ENCODE measurements at regions of chr17 and their contacts with region 1.

Region 1: DNA sequence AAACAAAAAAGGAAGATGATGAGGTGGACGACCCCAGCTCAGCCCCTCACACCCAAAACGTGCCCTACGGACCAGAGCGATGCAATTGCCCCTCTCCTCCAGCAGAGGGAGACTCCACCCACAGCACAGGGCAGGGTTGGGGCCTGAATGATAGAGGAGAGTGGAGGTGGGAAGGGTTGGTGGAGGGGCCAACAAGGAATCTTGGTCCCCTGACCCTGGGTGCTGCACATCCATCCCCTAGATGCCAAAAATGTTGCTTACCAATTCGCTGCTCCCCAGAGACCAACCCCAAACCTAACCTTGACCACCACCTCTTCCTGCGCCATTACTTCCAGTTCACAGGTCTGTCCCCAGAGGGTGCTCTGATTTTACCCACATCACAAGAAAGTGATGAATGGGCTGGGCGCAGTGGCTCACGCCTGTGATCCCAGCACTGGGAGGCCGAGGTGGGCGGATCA is 12.9 kb downstream of the P2RX5 start:
- DNase-seq: peak; percentile 65
- ATAC-seq: peak; percentile 98
- H3K4me3 Mint-ChIP-seq: no peak overlapping the region
- H3K27ac Mint-ChIP-seq: no peak overlapping the region
- H3K4me1 Mint-ChIP-seq: peaks cover 7% of the 10 kb centered on the region
- H3K27me3 Mint-ChIP-seq: no peaks in the 10 kb centered on the region
- CTCF ChIP-seq: peak; percentile 96

Region 2: GRCh38 chr17:3626831-3627768 is 56.0 kb before region 1 on chr17:
- CTCF ChIA-PET with region 1: no interaction called
- POLR2A ChIA-PET with region 1: no interaction called
- intact Hi-C with region 1: loop called (anchors 10 kb)
- DNase-seq: no peak
- ATAC-seq: no peak
- H3K4me3 Mint-ChIP-seq: no peak overlapping the region
- H3K27ac Mint-ChIP-seq: no peak overlapping the region
- H3K4me1 Mint-ChIP-seq: no peaks in the 10 kb centered on the region
- H3K27me3 Mint-ChIP-seq: no peaks in the 10 kb centered on the region
- CTCF ChIP-seq: no peak

Region 3: DNA sequence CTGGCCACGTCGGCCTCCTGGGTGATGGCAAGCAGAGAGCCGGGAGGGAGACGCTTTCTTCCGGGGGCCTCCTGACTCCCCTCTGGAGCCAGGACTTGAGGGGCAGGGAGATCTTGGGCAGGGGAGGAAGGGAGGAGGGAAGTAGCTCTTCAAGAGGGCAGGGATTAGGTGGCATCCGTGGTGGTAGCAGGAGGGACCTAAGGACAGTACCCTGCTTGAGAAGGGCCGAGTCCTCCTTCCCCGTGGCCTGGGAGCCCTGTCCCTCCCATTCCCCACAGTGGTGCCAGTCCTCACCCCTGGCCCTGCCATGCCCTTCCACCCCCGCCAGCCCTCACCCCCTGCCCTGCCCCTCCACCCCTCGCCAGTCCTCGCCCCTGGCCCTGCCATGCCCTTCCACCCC is 27.3 kb before region 1 on chr17:
- CTCF ChIA-PET with region 1: no interaction called
- POLR2A ChIA-PET with region 1: no interaction called
- intact Hi-C with region 1: no loop called
- DNase-seq: no peak
- ATAC-seq: no peak
- H3K4me3 Mint-ChIP-seq: no peak overlapping the region
- H3K27ac Mint-ChIP-seq: no peak overlapping the region
- H3K4me1 Mint-ChIP-seq: no peaks in the 10 kb centered on the region
- H3K27me3 Mint-ChIP-seq: no peaks in the 10 kb centered on the region
- CTCF ChIP-seq: no peak

Region 4: DNA sequence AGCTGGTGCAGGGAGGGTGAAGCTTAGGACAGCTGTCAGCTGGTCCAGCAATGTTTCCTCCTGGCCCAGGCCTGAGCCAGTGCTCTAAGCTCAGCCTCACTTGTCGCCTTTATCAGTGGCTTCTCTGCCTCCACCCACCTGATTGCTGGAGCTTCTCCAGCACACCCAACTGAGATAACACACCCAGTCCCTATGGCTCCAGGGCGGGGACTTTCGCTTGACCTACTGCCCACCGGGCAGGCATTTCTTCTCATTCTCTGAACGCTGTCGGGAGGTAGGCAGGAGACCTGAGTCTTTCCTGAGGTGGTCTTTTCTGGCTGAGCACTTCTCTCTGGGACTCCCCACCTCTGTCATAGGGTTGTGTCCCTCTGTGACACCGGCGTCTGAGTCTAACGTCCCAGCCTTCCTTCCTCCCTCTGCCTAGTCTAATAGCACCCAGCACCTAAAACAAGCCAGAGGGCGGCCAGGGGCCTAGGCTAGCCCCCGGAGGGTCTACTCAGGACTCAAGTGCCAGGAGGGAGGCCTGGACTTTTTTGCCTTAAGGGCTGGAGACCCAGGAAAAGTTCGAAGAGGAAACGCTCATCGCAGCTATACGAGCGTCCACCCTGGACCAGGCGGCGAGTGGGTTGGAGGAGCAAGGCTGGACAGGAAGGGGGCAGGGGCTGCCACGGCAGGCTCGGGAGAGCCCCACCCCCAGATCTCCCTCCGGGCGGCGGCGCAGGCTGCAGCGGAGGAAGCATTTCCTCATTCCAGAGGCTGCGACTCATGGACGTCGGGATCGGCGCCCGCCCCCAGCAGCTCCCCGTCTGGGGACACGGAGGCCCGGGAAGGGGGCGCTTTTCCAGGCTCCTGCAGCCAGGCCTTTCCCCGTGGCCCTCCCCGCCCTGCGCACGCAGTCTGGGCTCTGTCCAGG is 15.5 kb before region 1 on chr17:
- CTCF ChIA-PET with region 1: interaction called, 19 read pairs
- POLR2A ChIA-PET with region 1: interaction called, 3 read pairs
- intact Hi-C with region 1: no loop called
- DNase-seq: peak; percentile 9
- ATAC-seq: no peak
- H3K4me3 Mint-ChIP-seq: peak overlapping the region; percentile 98
- H3K27ac Mint-ChIP-seq: no peak overlapping the region
- H3K4me1 Mint-ChIP-seq: peaks cover 16% of the 10 kb centered on the region
- H3K27me3 Mint-ChIP-seq: no peaks in the 10 kb centered on the region
- CTCF ChIP-seq: no peak

Region 5: GRCh38 chr17:3695723-3696411 is 12.8 kb after region 1 on chr17 and contains the start of gene P2RX5:
- CTCF ChIA-PET with region 1: interaction called, 10 read pairs
- POLR2A ChIA-PET with region 1: interaction called, 6 read pairs
- intact Hi-C with region 1: no loop called
- DNase-seq: peak; percentile 60
- ATAC-seq: peak; percentile 60
- H3K4me3 Mint-ChIP-seq: peak within 1 kb of the TSS; percentile 87
- H3K27ac Mint-ChIP-seq: peak within 1 kb of the TSS; percentile 93
- H3K4me1 Mint-ChIP-seq: peaks cover 22% of the 10 kb centered on the region
- H3K27me3 Mint-ChIP-seq: no peaks in the 10 kb centered on the region
- CTCF ChIP-seq: no peak
- total RNA-seq, gene P2RX5: 35.7 to 39.5 TPM

Region 6: GRCh38 chr17:3723556-3724369 is 40.7 kb after region 1 on chr17 and contains the start of gene HASPIN:
- CTCF ChIA-PET with region 1: interaction called, 38 read pairs
- POLR2A ChIA-PET with region 1: interaction called, 4 read pairs
- intact Hi-C with region 1: loop called (anchors 5 kb)
- DNase-seq: peak; percentile 93
- ATAC-seq: peak; percentile 91
- H3K4me3 Mint-ChIP-seq: peak within 1 kb of the TSS; percentile 81
- H3K27ac Mint-ChIP-seq: peak within 1 kb of the TSS; percentile 92
- H3K4me1 Mint-ChIP-seq: peaks cover 54% of the 10 kb centered on the region
- H3K27me3 Mint-ChIP-seq: no peaks in the 10 kb centered on the region
- CTCF ChIP-seq: peak; percentile 42
- total RNA-seq, gene HASPIN: 20.7 to 21.3 TPM

Region 7: DNA sequence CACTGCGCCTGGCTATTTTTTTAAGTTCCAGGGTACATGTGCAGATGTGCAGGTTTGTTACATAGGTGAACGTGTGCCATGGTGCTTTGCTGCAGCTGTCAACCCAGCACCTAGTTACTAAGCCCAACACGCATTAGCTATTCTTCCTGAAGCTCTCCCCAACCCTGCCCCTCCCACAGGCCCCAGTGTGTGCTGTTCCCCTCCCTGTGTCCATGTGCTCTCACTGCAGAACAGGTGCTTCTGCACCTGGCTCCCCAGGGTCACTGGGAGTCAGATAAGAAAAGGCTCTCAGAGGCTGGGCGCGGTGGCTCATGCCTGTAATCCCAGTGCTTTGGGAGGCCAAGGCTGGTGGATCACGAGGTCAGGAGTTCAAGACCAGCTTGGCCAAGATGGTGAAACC is 46.8 kb after region 1 on chr17:
- CTCF ChIA-PET with region 1: interaction called, 12 read pairs
- POLR2A ChIA-PET with region 1: interaction called, 4 read pairs
- intact Hi-C with region 1: no loop called
- DNase-seq: no peak
- ATAC-seq: no peak
- H3K4me3 Mint-ChIP-seq: no peak overlapping the region
- H3K27ac Mint-ChIP-seq: no peak overlapping the region
- H3K4me1 Mint-ChIP-seq: peaks cover 20% of the 10 kb centered on the region
- H3K27me3 Mint-ChIP-seq: no peaks in the 10 kb centered on the region
- CTCF ChIP-seq: no peak

Region 8: DNA sequence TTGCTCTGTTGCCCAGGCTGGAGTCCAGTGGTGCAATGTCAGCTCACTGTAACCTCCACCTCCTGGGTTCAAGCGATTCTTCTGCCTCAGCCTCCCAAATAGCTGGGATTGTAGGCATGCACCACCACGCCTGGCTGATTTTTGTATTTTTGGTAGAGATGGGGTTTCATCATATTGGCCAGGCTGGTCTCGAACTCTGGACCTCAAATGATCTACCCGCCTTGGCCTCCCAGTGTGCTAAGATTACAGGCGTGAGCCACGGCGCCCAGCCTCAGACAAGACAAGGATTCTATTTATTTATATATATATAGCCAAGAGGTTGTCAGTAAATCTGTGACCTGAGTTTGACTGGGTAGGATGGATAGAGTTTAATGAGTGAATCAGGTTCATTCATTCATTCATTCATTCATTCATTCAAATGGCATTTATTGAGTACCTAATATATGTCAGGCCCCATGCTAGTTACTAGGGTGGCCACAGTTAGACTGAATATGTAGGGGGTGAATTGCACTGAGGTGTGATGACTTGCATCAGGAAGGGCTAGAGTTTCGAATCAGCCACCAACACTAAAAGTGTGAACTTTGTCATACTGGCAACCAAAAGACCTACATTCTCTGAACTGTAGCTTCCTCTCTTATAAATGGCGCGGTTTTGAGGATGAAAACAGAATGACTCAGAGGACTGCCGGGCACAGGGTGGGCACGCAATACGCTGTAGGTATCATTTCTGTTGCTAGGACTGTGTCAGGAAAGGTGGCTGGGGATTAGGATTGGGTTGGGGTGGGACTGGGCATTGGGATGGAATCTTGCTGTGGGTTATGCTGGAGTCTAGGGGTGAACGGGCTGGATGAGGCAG is 80.1 kb after region 1 on chr17:
- CTCF ChIA-PET with region 1: no interaction called
- POLR2A ChIA-PET with region 1: no interaction called
- intact Hi-C with region 1: no loop called
- DNase-seq: peak; percentile 79
- ATAC-seq: peak; percentile 67
- H3K4me3 Mint-ChIP-seq: peak overlapping the region; percentile 43
- H3K27ac Mint-ChIP-seq: peak overlapping the region; percentile 97
- H3K4me1 Mint-ChIP-seq: peaks cover 53% of the 10 kb centered on the region
- H3K27me3 Mint-ChIP-seq: peaks cover 6% of the 10 kb centered on the region
- CTCF ChIP-seq: no peak

Measured in activated CD8-positive, alpha-beta T cell treated with anti-CD3 and anti-CD28 coated beads for 36 hours (primary cell).